Breast epithelium (tissue), 4 donors: ENCODE measurements at regions of chr9 and their contacts with region 1.

Region 1: DNA sequence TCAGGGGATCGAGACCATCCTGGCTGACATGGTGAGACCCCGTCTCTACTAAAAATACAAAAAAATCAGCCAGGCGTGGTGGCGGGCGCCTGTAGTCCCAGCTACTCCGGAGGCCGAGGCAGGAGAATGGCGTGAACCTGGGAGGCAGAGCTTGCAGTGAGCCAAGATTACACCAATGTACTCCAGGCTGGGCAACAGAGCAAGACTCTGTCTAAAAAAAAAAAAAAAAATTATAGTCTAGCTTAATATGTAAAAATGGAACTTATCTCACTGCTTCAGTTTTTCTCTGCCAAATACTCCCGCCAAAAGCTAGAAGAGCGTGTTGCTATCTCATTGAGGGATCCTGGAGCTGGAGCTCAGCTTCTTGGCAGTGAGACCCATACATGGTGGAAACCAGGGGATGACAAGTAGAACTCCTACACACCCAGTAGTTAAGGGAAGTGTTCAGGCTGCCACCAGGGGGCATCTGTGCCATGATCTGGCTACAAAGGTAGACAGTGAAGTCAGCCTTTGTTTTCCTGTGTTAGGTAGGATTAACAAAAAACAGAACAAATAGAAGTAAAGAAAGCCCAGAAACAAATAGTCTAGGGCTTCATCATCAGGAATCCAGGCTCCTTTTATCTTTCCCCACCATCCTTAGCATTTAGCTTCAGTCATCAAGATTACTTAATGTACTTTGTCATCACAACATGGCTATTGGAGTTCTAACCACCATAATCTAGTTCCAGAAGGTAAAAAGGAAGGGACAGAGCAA is 33.6 kb upstream of the GLIPR2 start:
- DNase-seq: peak; percentile 65 to 66
- H3K4me3 ChIP-seq: no peak overlapping the region
- H3K27ac ChIP-seq: no peak overlapping the region
- H3K4me1 ChIP-seq: no peaks in the 10 kb centered on the region
- H3K27me3 ChIP-seq: no peaks in the 10 kb centered on the region
- CTCF ChIP-seq: peak; percentile 56 to 77 (median 68)
- POLR2A ChIP-seq: no peak

Region 2: DNA sequence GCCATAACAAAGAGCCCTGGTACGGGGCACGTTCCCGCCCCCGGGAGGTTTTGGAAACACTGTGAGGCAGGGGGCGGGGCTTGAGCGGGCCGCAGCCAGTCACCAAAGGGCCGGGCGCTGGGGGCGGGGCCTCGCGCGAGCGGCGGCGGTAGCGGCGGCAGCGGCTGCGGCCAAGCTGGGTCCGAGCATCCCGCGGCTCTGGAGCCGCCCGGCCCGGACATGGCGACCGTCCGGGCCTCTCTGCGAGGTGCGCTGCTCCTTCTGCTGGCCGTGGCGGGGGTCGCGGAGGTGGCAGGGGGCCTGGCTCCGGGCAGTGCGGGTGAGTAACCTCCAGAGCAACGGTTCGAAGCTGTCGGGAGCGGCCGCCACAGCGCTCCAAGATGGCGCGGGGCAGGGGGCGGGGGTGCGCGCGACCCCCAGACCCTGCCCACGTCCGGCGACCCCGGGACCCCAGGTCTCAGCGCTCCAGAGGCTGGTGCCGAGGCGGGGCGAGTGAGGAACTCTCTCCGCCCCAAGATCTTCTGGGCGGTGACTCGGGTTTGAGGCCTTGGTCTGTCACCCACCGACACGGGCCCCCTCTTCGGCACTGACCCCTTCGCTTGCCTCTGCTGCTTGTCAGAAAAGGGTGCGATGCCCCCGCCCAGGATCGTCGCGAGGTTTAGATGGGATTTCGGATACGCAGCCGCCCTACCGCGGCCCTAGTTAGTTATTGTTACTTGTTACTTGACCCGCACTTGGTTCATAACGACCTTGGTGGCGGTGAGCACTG is 66.0 kb before region 1 on chr9 and contains the start of gene RECK:
- intact Hi-C with region 1: loop called (anchors 2 kb)
- DNase-seq: peak; percentile 80 to 87
- H3K4me3 ChIP-seq: peak within 1 kb of the TSS; percentile 88 to 98 (median 89)
- H3K27ac ChIP-seq: peak within 1 kb of the TSS; percentile 82 to 87
- H3K4me1 ChIP-seq: no peaks in the 10 kb centered on the region
- H3K27me3 ChIP-seq: no peaks in the 10 kb centered on the region
- CTCF ChIP-seq: no peak
- POLR2A ChIP-seq: peak; percentile 21
- total RNA-seq, gene RECK: 12.7 to 25.6 (median 17.7) TPM

Region 3: DNA sequence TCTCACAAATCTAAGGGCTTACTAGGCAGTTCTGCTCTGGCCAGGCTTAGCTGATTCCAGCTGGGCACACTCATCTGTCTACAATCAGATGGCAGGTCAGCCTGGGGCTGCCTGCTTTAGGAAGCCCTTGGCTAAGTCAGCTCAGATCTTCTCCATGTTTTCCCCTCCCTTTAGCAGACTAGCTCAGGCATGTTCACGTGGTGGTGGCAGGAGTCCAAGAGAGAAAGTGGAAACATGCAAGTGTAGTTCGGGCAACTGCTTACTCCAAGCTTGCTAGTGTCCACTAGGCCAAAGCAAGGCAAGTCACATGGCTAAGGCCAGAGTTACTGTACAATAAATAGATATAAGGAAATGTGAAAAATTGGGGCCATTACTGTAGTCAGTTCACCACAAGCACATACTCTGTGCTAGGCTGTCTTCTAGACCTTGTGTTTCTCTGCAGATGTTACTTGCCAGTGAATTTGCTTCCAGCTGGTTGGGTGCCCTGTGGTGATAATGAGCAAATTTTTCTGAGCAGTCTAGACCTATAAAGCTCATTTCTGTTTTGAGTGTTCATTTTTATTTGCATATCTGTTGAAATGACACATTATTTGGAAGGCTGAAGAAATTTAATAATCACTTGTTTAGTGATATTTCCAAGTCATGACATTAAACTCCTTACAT is 27.9 kb before region 1 on chr9:
- intact Hi-C with region 1: no loop called
- DNase-seq: peak; percentile 52 to 71
- H3K4me3 ChIP-seq: no peak overlapping the region
- H3K27ac ChIP-seq: peak overlapping the region; percentile 21 to 57
- H3K4me1 ChIP-seq: peaks cover 0 to 10% of the 10 kb centered on the region in 2 donors
- H3K27me3 ChIP-seq: no peaks in the 10 kb centered on the region
- CTCF ChIP-seq: no peak
- POLR2A ChIP-seq: no peak

Region 4: GRCh38 chr9:36166101-36166927 is 63.4 kb after region 1 on chr9:
- intact Hi-C with region 1: loop called (anchors 10 kb)
- DNase-seq: peak; percentile 56 to 79
- H3K4me3 ChIP-seq: peak overlapping the region; percentile 39 to 67 (median 50)
- H3K27ac ChIP-seq: peak overlapping the region; percentile 41 to 82
- H3K4me1 ChIP-seq: no peaks in the 10 kb centered on the region
- H3K27me3 ChIP-seq: no peaks in the 10 kb centered on the region
- CTCF ChIP-seq: peak; percentile 87 to 89 (median 89)
- POLR2A ChIP-seq: no peak